ENCODE measurements at regions of chr1 and their contacts with region 1.

Region 1: GRCh38 chr1:63691701-63692425 is 82.0 kb upstream of the ROR1 start:
- DNase-seq: peak; percentile 41
- ATAC-seq: peak; percentile 93
- H3K4me3 Mint-ChIP-seq: no peak overlapping the region
- H3K27ac Mint-ChIP-seq: no peak overlapping the region
- H3K4me1 Mint-ChIP-seq: peaks cover 7% of the 10 kb centered on the region; the same call in 1 of the 2 replicates
- H3K27me3 Mint-ChIP-seq: no peaks in the 10 kb centered on the region
- CTCF ChIP-seq: 0 out of 2 replicates have a peak, but pooled peaks have one; percentile 47

Region 2: GRCh38 chr1:63024132-63024531 is 667.7 kb before region 1 on chr1:
- CTCF ChIA-PET with region 1: no interaction called
- POLR2A ChIA-PET with region 1: no interaction called
- DNase-seq: no peak
- ATAC-seq: no peak
- H3K4me3 Mint-ChIP-seq: no peak overlapping the region
- H3K27ac Mint-ChIP-seq: no peak overlapping the region
- H3K4me1 Mint-ChIP-seq: peaks cover 11% of the 10 kb centered on the region; the same call in 1 of the 2 replicates
- H3K27me3 Mint-ChIP-seq: no peaks in the 10 kb centered on the region; the same call in 1 of the 2 replicates
- CTCF ChIP-seq: no peak

Region 3: GRCh38 chr1:63547621-63548294 is 144.1 kb before region 1 on chr1:
- CTCF ChIA-PET with region 1: no interaction called
- POLR2A ChIA-PET with region 1: no interaction called
- DNase-seq: no peak
- ATAC-seq: no peak
- H3K4me3 Mint-ChIP-seq: no peak overlapping the region
- H3K27ac Mint-ChIP-seq: no peak overlapping the region
- H3K4me1 Mint-ChIP-seq: no peaks in the 10 kb centered on the region
- H3K27me3 Mint-ChIP-seq: no peaks in the 10 kb centered on the region
- CTCF ChIP-seq: no peak

Region 4: DNA sequence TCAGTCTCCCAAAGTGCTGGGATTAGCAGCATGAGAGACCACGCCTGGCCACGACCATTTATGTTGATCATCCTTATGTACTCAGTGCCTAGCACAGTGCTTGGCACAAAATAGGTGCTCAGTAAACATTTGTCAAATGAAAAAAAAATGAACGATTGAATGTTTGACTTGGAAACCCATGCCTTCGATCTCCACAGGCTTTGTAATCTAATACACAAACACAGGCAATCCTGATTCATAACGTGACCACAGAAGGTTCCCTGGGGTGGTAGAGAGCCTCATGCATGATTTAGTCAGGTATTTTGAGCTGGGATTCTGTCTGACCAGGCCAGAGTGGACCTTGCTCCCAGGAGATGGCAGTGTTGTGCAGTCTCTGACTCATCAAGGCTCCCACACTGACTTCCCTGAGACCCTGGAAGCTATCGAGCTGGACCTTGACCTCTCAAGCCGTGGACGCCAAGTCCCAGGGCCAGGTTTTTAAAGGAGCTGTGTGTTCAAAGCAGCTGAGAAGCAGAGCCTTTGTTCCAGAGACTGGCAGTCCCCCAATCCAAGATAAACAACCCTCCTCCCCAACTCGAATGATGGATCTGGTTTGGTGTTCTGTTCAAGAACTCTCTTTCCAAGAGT is 17.5 kb before region 1 on chr1:
- CTCF ChIA-PET with region 1: interaction called, 95 read pairs
- POLR2A ChIA-PET with region 1: interaction called, 3 read pairs
- DNase-seq: peak; percentile 82
- ATAC-seq: peak; percentile 95
- H3K4me3 Mint-ChIP-seq: no peak overlapping the region
- H3K27ac Mint-ChIP-seq: peak overlapping the region; percentile 31; the same call in 1 of the 2 replicates
- H3K4me1 Mint-ChIP-seq: peaks cover 23% of the 10 kb centered on the region
- H3K27me3 Mint-ChIP-seq: no peaks in the 10 kb centered on the region
- CTCF ChIP-seq: peak; percentile 34; the same call in 1 of the 2 replicates

Region 5: GRCh38 chr1:63757334-63757733 is 65.5 kb after region 1 on chr1:
- CTCF ChIA-PET with region 1: interaction called, 10 read pairs
- POLR2A ChIA-PET with region 1: no interaction called
- DNase-seq: no peak
- ATAC-seq: no peak
- H3K4me3 Mint-ChIP-seq: no peak overlapping the region
- H3K27ac Mint-ChIP-seq: no peak overlapping the region
- H3K4me1 Mint-ChIP-seq: peaks cover 8% of the 10 kb centered on the region
- H3K27me3 Mint-ChIP-seq: no peaks in the 10 kb centered on the region
- CTCF ChIP-seq: no peak

Region 6: GRCh38 chr1:63868268-63868781 is 176.5 kb after region 1 on chr1:
- CTCF ChIA-PET with region 1: interaction called, 16 read pairs
- POLR2A ChIA-PET with region 1: no interaction called
- DNase-seq: no peak
- ATAC-seq: peak; percentile 38; the same call in 1 of the 2 replicates
- H3K4me3 Mint-ChIP-seq: no peak overlapping the region
- H3K27ac Mint-ChIP-seq: no peak overlapping the region; the same call in 1 of the 2 replicates
- H3K4me1 Mint-ChIP-seq: peaks cover 82% of the 10 kb centered on the region
- H3K27me3 Mint-ChIP-seq: no peaks in the 10 kb centered on the region
- CTCF ChIP-seq: no peak

Region 7: DNA sequence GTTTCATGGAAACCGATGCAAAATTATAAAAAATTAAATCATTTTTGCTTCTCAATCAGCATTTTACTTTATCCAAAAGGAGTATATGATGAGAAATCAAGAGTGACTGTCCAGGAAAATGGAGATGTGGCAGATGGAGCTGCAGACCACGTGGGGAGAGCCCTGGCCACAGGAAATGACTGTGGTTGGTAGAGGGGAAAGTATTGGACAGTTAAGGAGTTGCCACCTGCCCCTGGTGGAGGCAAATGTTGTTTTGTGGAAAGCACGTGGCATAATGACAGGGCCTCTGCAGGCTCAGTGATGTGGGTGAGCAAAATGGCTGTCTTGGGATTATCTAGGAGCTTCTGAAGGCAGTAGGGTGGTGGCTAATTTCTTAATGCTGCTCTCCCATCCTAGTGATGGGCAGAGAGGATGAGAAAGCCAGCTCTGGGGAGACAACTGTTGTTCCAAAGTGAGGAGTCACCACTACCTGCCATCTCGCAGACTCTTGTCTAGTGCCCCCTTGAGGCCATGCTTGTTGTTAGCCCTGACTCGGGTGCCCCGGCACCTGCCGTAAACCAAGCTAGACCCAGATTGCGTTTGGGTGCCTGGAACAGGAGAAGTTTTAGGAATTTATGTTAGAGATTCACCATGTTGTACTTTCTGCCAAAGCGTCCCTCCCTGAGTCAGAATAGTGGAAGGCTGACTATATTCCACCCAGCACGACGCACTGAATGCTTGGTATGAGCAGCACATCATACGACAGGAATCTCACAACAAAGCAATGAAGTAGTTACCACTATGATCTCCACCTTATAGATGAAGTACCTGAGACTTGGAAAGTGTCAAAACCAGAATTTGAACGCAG is 225.9 kb after region 1 on chr1:
- CTCF ChIA-PET with region 1: interaction called, 67 read pairs
- POLR2A ChIA-PET with region 1: interaction called, 3 read pairs
- DNase-seq: peak; percentile 78
- ATAC-seq: peak; percentile 73
- H3K4me3 Mint-ChIP-seq: no peak overlapping the region
- H3K27ac Mint-ChIP-seq: peak overlapping the region; percentile 69
- H3K4me1 Mint-ChIP-seq: peaks cover 89% of the 10 kb centered on the region
- H3K27me3 Mint-ChIP-seq: no peaks in the 10 kb centered on the region
- CTCF ChIP-seq: peak; percentile 58

Region 8: DNA sequence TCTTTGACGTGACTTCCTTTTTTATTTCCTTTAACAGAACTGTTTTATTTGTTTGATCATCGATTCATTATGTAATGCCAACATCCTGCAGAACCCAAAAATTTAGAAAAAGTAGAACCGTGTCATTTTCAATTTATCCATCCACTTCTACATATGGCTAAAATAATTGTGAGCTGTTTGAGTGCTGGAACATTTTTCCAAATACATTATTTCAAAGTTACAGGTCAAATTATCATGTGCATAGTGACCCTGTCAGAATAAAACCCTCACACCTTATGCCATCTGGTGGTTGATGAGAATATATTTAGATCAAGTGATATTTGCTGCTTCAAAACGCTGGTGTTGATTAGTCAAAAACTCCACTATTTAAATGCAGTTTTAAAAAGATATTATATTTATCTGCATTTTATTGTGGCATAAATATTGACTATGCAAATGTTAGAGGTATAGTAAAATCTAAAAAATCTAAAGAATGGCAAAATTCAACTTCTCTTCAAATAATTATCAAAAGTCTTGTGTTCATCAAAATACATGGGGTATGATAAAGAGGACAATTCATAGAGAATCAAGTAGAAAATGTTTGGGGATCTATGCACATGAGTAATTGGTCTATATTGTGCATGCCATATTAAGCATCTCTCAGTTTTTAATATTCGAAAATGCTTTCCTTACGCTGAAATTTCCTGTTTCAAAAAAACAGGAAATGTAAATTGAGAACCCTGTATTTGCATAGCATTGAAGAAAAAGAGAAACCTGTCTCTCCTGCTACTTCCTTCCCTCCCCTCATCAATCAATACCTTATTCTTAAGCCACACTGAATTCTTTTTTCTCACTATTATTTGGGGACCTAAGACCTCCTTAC is 551.3 kb after region 1 on chr1:
- CTCF ChIA-PET with region 1: interaction called, 41 read pairs
- POLR2A ChIA-PET with region 1: no interaction called
- DNase-seq: no peak
- ATAC-seq: peak; percentile 12; the same call in 1 of the 2 replicates
- H3K4me3 Mint-ChIP-seq: peak overlapping the region; percentile 57
- H3K27ac Mint-ChIP-seq: peak overlapping the region; percentile 97
- H3K4me1 Mint-ChIP-seq: peaks cover 50% of the 10 kb centered on the region
- H3K27me3 Mint-ChIP-seq: peaks cover 3% of the 10 kb centered on the region; the same call in 1 of the 2 replicates
- CTCF ChIP-seq: no peak; the same call in 1 of the 2 replicates